CD4-positive, alpha-beta memory T cell (primary cell): ENCODE measurements at regions of chr2 and their contacts with region 1.

Region 1: DNA sequence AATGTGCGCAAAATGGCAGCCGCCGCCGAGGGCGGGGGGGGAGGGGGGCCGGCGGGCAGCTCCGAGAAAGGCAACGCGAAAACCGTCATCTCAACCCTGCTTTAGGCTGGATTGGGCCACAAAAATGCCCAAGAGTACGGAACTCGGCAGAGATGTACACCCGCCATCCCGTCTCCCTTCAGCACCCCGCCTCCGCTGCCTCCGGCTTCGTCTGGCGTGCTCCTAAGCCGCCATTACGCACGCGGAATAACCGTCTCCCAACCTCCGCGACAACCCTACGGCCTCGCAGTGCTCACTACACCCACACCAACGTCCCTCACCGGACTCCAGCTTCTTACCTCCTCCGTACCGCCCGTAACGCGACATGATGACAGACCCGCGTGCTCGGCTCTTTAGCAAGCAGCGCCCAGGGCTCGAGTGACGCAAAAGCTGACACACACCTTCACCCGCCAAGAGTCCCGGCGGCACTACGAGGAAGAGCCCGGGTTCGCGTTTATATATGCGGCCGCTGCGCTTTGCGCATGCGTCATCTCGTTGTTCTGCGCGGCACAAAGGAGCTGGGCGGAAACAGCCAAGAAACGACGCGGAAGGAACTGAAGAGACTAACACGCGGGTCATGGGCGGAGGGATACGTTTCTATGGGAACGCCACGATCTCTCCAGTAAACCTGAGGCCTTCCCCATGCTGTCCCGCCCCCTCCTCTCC is at the start of gene SRSF7:
- DNase-seq: peak; percentile 96 to 98 (median 98)
- H3K4me3 ChIP-seq: peak within 1 kb of the TSS; percentile 96 to 98
- H3K4me3 Mint-ChIP-seq: peak within 1 kb of the TSS; percentile 98 to 100 (median 100)
- H3K27ac ChIP-seq: peak within 1 kb of the TSS; percentile 93
- H3K27ac Mint-ChIP-seq: peak within 1 kb of the TSS; percentile 99 to 100 (median 100)
- H3K4me1 ChIP-seq: peaks cover 56% of the 10 kb centered on the region
- H3K4me1 Mint-ChIP-seq: peaks cover 42 to 70% (median 50%) of the 10 kb centered on the region in 4 donors
- H3K27me3 ChIP-seq: no peaks in the 10 kb centered on the region
- H3K27me3 Mint-ChIP-seq: peaks cover 0 to 3% of the 10 kb centered on the region in 2 donors
- total RNA-seq, gene SRSF7: 314 to 333 TPM

Region 2: DNA sequence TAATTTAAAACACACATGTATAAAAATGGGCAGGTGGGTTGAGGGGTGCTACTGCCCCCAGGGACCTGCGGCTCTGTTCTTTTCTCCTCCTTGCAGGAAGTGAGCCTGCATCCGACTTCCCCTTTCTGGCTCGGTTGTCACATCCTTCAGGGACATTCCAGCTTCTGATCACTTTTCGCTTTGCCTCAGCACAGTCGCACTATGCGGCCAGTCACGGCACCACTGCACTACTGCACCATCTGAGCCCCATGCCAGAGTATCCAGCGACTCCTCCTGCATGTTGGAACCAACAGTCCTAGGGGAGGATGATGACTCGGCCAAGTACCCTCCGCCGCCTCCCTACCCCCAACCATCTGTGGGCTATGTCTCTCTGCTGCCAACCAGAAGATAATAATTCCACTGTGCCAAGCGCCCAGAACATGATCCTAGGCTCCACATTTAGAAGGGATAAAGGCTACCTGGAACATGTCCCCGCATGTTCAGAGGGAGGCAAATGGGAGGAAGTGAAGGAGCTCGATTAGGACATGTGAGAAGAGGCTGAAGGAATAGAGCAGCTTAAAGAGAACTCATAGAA is 1097.2 kb before region 1 on chr2:
- CTCF ChIA-PET with region 1: no interaction called
- POLR2A ChIA-PET with region 1: no interaction called
- intact Hi-C with region 1: no loop called
- DNase-seq: no peak
- H3K4me3 ChIP-seq: no peak overlapping the region
- H3K4me3 Mint-ChIP-seq: peak overlapping the region in 7 of 8 donors; percentile 48 to 76 (median 70)
- H3K27ac ChIP-seq: peak overlapping the region; percentile 63
- H3K27ac Mint-ChIP-seq: peak overlapping the region; percentile 78 to 96 (median 89)
- H3K4me1 ChIP-seq: peaks cover 96% of the 10 kb centered on the region
- H3K4me1 Mint-ChIP-seq: peaks cover 80 to 98% (median 88%) of the 10 kb centered on the region in 4 donors
- H3K27me3 ChIP-seq: no peaks in the 10 kb centered on the region
- H3K27me3 Mint-ChIP-seq: no peaks in the 10 kb centered on the region

Region 3: GRCh38 chr2:38377050-38377828 is 373.8 kb before region 1 on chr2 and contains the start of gene ATL2:
- CTCF ChIA-PET with region 1: no interaction called
- POLR2A ChIA-PET with region 1: interaction called, 32 read pairs
- intact Hi-C with region 1: loop called (anchors 1 kb)
- DNase-seq: peak; percentile 91 to 97 (median 94)
- H3K4me3 ChIP-seq: peak within 1 kb of the TSS; percentile 67 to 85
- H3K4me3 Mint-ChIP-seq: peak within 1 kb of the TSS; percentile 93 to 100 (median 96)
- H3K27ac ChIP-seq: peak within 1 kb of the TSS; percentile 89
- H3K27ac Mint-ChIP-seq: peak within 1 kb of the TSS; percentile 90 to 98 (median 97)
- H3K4me1 ChIP-seq: peaks cover 63% of the 10 kb centered on the region
- H3K4me1 Mint-ChIP-seq: peaks cover 45 to 81% (median 65%) of the 10 kb centered on the region in 4 donors
- H3K27me3 ChIP-seq: no peaks in the 10 kb centered on the region
- H3K27me3 Mint-ChIP-seq: no peaks in the 10 kb centered on the region
- total RNA-seq, gene ATL2: 51.5 to 64.3 TPM

Region 4: GRCh38 chr2:38581193-38582147 is 169.6 kb before region 1 on chr2:
- CTCF ChIA-PET with region 1: interaction called, 27 read pairs
- POLR2A ChIA-PET with region 1: interaction called, 67 read pairs
- intact Hi-C with region 1: no loop called
- DNase-seq: peak; percentile 62 to 82 (median 81)
- H3K4me3 ChIP-seq: no peak overlapping the region
- H3K4me3 Mint-ChIP-seq: peak overlapping the region in 1 of 8 donors; percentile 22
- H3K27ac ChIP-seq: no peak overlapping the region
- H3K27ac Mint-ChIP-seq: peak overlapping the region in 5 of 7 donors; percentile 41 to 65 (median 62)
- H3K4me1 ChIP-seq: peaks cover 51% of the 10 kb centered on the region
- H3K4me1 Mint-ChIP-seq: peaks cover 26 to 64% (median 41%) of the 10 kb centered on the region in 4 donors
- H3K27me3 ChIP-seq: no peaks in the 10 kb centered on the region
- H3K27me3 Mint-ChIP-seq: no peaks in the 10 kb centered on the region

Region 5: DNA sequence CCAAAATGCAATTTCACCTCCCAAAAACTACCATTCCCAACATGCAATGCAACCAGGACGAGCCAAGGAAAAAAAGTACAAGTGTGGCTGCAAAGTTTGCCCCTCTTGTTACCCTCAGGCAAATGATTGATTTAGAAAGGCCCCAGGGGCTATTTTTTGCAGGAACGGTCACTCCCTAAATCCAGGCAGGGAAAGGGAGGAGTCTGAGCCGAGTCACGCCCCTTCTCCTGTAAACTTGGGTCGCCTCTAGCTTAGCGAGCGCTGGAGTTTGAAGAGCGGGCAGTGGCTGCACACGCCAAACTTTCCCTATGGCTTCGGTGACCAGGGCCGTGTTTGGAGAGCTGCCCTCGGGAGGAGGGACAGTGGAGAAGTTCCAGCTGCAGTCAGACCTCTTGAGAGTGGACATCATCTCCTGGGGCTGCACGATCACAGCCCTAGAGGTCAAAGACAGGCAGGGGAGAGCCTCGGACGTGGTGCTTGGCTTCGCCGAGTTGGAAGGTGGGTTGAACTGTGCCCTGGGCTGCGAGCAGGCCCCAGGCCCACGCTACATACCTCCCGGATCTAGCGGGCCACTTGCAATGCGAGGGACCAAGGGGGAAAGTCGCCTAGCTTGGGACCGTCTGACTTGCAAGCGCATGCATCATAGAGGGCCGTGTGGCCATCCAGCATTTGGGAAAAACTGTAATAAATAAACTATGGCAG is 85.0 kb before region 1 on chr2 and contains the start of gene GALM:
- CTCF ChIA-PET with region 1: no interaction called
- POLR2A ChIA-PET with region 1: interaction called, 91 read pairs
- intact Hi-C with region 1: loop called (anchors 1 kb)
- DNase-seq: peak; percentile 51 to 68 (median 62)
- H3K4me3 ChIP-seq: peak within 1 kb of the TSS; percentile 63 to 74
- H3K4me3 Mint-ChIP-seq: peak within 1 kb of the TSS; percentile 81 to 97 (median 94)
- H3K27ac ChIP-seq: peak within 1 kb of the TSS; percentile 73
- H3K27ac Mint-ChIP-seq: peak within 1 kb of the TSS; percentile 93 to 100 (median 98)
- H3K4me1 ChIP-seq: peaks cover 73% of the 10 kb centered on the region
- H3K4me1 Mint-ChIP-seq: peaks cover 47 to 80% (median 64%) of the 10 kb centered on the region in 4 donors
- H3K27me3 ChIP-seq: no peaks in the 10 kb centered on the region
- H3K27me3 Mint-ChIP-seq: no peaks in the 10 kb centered on the region
- total RNA-seq, gene GALM: 35.5 to 35.8 TPM

Region 6: GRCh38 chr2:38702413-38702812 is 48.6 kb before region 1 on chr2:
- CTCF ChIA-PET with region 1: interaction called, 4 read pairs
- POLR2A ChIA-PET with region 1: interaction called, 18 read pairs
- intact Hi-C with region 1: no loop called
- DNase-seq: no peak
- H3K4me3 ChIP-seq: no peak overlapping the region
- H3K4me3 Mint-ChIP-seq: peak overlapping the region in 6 of 8 donors; percentile 51 to 71 (median 64)
- H3K27ac ChIP-seq: peak overlapping the region; percentile 41
- H3K27ac Mint-ChIP-seq: peak overlapping the region; percentile 84 to 97 (median 94)
- H3K4me1 ChIP-seq: peaks cover 88% of the 10 kb centered on the region
- H3K4me1 Mint-ChIP-seq: peaks cover 45 to 77% (median 62%) of the 10 kb centered on the region in 4 donors
- H3K27me3 ChIP-seq: no peaks in the 10 kb centered on the region
- H3K27me3 Mint-ChIP-seq: no peaks in the 10 kb centered on the region

Region 7: GRCh38 chr2:38734299-38735058 is 16.6 kb before region 1 on chr2:
- CTCF ChIA-PET with region 1: no interaction called
- POLR2A ChIA-PET with region 1: interaction called, 113 read pairs
- intact Hi-C with region 1: no loop called
- DNase-seq: no peak
- H3K4me3 ChIP-seq: no peak overlapping the region
- H3K4me3 Mint-ChIP-seq: no peak overlapping the region
- H3K27ac ChIP-seq: no peak overlapping the region
- H3K27ac Mint-ChIP-seq: peak overlapping the region in 3 of 7 donors; percentile 47 to 70 (median 68)
- H3K4me1 ChIP-seq: no peaks in the 10 kb centered on the region
- H3K4me1 Mint-ChIP-seq: peaks cover 7 to 21% (median 14%) of the 10 kb centered on the region in 4 donors
- H3K27me3 ChIP-seq: no peaks in the 10 kb centered on the region
- H3K27me3 Mint-ChIP-seq: no peaks in the 10 kb centered on the region

Region 8: DNA sequence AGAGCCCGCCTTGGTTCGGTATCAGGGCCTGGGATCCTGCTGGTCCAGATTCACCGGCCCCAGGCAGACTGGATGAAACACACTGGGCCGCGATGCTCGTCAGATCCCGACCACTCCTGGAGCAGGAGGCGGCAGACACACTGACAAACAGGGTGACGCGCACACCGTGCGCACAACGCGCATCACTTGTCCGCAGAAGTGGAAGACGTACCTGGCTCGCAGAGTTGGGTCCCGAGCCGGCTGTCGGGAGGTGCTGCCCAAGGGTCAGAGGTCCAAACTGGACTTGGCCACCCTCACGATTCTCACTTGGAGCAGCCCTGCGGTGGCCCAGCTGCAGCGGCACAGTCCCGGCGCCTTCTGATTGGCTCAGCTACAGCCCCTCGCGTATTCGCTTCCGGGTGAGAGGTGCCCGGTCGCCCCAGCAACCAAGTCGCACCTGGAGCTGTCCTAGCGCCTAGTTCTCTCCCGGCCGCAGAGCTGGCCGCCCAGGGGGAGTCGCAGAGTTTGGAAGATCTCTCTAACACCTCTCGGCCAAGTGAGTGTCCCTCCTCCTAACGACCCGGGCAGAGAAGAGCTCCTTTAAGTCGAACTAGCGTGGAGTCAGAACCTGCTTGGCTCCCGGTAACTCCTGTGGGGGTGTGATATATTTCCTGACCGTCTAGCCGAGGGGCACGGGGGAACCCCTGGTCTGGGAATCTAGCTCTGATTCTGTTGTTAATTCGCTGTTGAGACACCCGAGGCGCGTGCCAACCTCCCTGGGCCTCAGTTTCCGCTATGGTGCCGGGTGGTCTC is 124.7 kb after region 1 on chr2 and contains the starts of genes DHX57 and MORN2:
- CTCF ChIA-PET with region 1: no interaction called
- POLR2A ChIA-PET with region 1: interaction called, 29 read pairs
- intact Hi-C with region 1: no loop called
- DNase-seq: peak; percentile 77 to 85 (median 83)
- H3K4me3 ChIP-seq: peak within 1 kb of the TSS; percentile 95 to 97
- H3K4me3 Mint-ChIP-seq: peak within 1 kb of the TSS; percentile 95 to 99 (median 98)
- H3K27ac ChIP-seq: peak within 1 kb of the TSS; percentile 72
- H3K27ac Mint-ChIP-seq: peak within 1 kb of the TSS; percentile 89 to 98 (median 98)
- H3K4me1 ChIP-seq: peaks cover 15% of the 10 kb centered on the region
- H3K4me1 Mint-ChIP-seq: peaks cover 15 to 30% (median 24%) of the 10 kb centered on the region in 4 donors
- H3K27me3 ChIP-seq: no peaks in the 10 kb centered on the region
- H3K27me3 Mint-ChIP-seq: no peaks in the 10 kb centered on the region
- total RNA-seq, gene DHX57: 16.6 to 23.5 TPM
- total RNA-seq, gene MORN2: 0.49 to 2.0 TPM